Dorsolateral prefrontal cortex (tissue), 120 donors: ENCODE measurements at regions of chr5 and their contacts with region 1.

Region 1: DNA sequence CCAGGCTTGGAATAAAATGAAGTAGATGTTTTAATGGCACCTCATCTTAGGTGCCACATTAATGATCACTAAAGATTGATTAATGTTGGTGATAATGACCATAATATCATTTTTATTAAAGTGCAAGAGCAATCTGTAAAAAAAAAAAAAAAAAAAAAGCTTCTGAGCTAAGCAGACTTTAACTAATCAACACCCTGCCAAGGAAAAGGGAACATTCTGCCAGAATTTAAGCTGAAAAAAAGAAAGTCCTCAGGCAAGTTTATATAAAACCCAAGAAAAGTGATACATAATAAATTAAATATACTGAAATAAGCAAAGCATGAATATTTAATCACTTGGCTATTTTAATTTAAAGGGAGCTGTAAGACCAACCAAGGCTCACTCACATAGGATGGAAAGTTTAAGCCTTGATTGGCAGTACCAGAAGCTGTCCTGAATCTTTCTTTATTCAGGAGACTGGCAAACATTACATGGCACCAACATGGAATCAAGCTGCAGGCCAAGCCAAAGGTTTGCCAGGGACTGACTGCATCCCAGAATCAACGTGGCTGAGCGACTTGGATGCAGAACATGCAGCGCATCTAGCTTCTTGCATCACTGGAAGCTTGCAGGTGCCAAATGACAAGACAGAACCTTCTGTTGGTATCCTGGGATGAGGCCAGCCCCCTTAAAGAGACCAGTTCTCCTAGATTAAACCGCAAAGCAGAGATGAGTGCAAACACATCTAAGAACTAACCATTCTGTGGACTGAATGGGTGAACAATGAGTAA is 413.6 kb downstream of the ENC1 start:
- DNase-seq: peak in 8 of 10 donors; percentile 27 to 67 (median 52)
- H3K4me3 ChIP-seq: no peak overlapping the region
- H3K27ac ChIP-seq: peak overlapping the region in 47 of 59 donors; percentile 1 to 81 (median 49)
- H3K27me3 ChIP-seq: peaks cover 0 to 3% (median 0%) of the 10 kb centered on the region in 45 donors
- CTCF ChIP-seq: no peak

Region 2: DNA sequence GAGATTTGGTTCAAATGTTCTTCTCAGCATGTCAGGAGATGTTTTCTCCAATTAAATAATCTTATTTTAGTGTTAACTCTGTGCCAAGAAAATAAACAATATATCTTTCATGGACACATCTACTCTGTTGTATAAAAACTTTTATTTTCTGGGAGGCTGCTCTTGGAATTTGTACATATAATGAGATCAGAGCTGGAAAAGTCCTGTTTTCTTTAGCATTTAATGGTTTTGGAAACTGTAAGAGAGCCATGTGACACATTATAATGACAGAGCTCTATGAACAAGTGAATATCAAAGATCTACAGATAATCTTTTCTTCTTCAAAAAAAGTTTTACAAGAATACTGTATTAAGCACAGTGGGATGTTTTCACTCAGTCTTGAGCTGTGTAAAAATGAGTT is 827.1 kb before region 1 on chr5:
- intact Hi-C with region 1: no loop called
- DNase-seq: no peak
- H3K4me3 ChIP-seq: no peak overlapping the region
- H3K27ac ChIP-seq: no peak overlapping the region
- H3K27me3 ChIP-seq: peaks cover 0 to 64% (median 15%) of the 10 kb centered on the region in 45 donors
- CTCF ChIP-seq: no peak

Region 3: GRCh38 chr5:73722231-73722630 is 504.7 kb before region 1 on chr5:
- intact Hi-C with region 1: no loop called
- DNase-seq: no peak
- H3K4me3 ChIP-seq: no peak overlapping the region
- H3K27ac ChIP-seq: no peak overlapping the region
- H3K27me3 ChIP-seq: peaks cover 0 to 11% (median 0%) of the 10 kb centered on the region in 45 donors
- CTCF ChIP-seq: no peak

Region 4: GRCh38 chr5:74127381-74128320 is 99.2 kb before region 1 on chr5:
- intact Hi-C with region 1: no loop called
- DNase-seq: peak in 1 of 10 donors; percentile 75
- H3K4me3 ChIP-seq: no peak overlapping the region
- H3K27ac ChIP-seq: no peak overlapping the region
- H3K27me3 ChIP-seq: peaks cover 0 to 3% (median 0%) of the 10 kb centered on the region in 45 donors
- CTCF ChIP-seq: peak in 1 of 56 donors; percentile 5

Region 5: GRCh38 chr5:74288448-74289108 is 61.7 kb after region 1 on chr5:
- intact Hi-C with region 1: loop called in 1 of 2 experiments (anchors 5 kb)
- DNase-seq: no peak
- H3K4me3 ChIP-seq: no peak overlapping the region
- H3K27ac ChIP-seq: peak overlapping the region in 52 of 59 donors; percentile 2 to 84 (median 62)
- H3K27me3 ChIP-seq: no peaks in the 10 kb centered on the region
- CTCF ChIP-seq: no peak

Region 6: GRCh38 chr5:74382987-74383593 is 156.2 kb after region 1 on chr5:
- intact Hi-C with region 1: loop called in 1 of 2 experiments (anchors 10 kb)
- DNase-seq: no peak
- H3K4me3 ChIP-seq: no peak overlapping the region
- H3K27ac ChIP-seq: peak overlapping the region in 47 of 59 donors; percentile 1 to 76 (median 48)
- H3K27me3 ChIP-seq: no peaks in the 10 kb centered on the region
- CTCF ChIP-seq: no peak

Region 7: GRCh38 chr5:74482990-74483389 is 256.1 kb after region 1 on chr5:
- intact Hi-C with region 1: no loop called
- DNase-seq: no peak
- H3K4me3 ChIP-seq: peak overlapping the region in 10 of 59 donors; percentile 1 to 39 (median 10)
- H3K27ac ChIP-seq: no peak overlapping the region
- H3K27me3 ChIP-seq: no peaks in the 10 kb centered on the region
- CTCF ChIP-seq: no peak